ENCODE measurements at regions of chr1 and their contacts with region 1.

Region 1: DNA sequence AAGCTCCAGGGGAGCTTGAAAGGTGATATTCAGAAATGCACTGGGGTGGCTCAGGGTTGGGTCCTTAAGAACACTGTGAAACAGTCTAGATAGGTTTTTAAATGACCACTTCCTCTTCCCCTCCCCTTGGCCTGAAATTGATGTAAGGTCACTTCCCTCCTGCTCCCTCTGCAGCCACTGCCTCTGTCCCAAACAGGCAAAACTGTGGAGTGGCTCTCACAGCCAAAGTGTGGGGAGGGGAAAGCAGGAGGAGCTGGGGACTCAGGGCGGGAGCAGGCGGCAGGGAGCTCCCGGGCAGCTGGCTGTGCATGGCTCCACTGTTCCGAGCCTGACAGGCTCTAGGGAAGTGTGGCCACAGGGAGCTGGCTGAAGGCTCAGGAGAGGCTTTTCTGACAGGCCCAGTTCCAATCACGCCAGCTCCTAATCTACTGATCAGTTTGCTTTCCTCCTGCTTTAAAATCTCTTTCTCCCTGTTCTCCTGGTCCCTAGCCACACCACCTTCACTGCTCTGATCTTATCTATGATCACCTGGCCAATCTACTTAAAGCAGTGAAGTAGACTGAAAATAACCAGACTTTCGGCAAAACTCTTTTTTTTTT is 5.1 kb upstream of the CSRP1 start:
- DNase-seq: peak; percentile 47
- H3K4me3 ChIP-seq: no peak overlapping the region
- H3K27ac ChIP-seq: peak overlapping the region; percentile 49
- H3K4me1 ChIP-seq: no peaks in the 10 kb centered on the region
- H3K27me3 ChIP-seq: no peaks in the 10 kb centered on the region
- CTCF ChIP-seq: no peak

Region 2: DNA sequence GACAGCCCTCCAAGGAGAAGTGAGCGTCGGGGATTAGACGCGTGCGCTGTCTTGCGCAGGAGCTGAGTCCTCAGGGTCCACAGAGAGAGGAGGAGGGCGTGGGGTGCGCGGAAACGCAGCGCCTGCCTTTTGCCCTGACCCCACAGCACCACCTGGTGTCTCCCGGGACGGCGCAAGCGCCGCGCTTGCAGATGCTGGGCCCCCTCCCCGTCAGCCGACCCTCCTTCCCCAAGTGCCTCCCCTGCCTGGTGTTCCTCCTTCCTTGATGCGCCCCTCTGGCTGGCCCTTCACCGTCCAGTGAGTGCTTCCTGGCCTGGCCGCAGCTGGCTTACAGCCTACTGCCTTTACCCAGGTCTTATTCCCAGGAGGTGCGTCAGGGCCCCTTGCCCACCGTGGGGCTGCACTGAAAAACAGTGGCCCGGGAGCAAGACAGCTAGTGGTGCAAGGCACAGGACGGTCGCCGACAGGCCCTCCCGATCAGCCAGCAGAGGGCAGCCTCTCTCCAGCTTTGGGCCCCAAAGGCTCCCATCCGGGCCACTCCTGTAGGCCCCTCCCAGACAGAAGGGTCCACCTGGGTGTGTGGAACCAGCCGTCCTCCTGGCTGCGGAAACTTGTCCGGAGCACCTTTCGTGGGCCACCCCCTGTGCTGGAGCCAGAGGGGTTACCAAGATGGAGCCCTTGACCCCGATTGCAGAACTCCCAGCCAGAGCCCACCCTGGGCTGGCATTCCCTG is 30.1 kb before region 1 on chr1:
- intact Hi-C with region 1: loop called (anchors 1 kb)
- DNase-seq: peak; percentile 90
- H3K4me3 ChIP-seq: peak overlapping the region; percentile 28
- H3K27ac ChIP-seq: peak overlapping the region; percentile 72
- H3K4me1 ChIP-seq: peaks cover 16% of the 10 kb centered on the region
- H3K27me3 ChIP-seq: no peaks in the 10 kb centered on the region
- CTCF ChIP-seq: peak; percentile 95

Region 3: DNA sequence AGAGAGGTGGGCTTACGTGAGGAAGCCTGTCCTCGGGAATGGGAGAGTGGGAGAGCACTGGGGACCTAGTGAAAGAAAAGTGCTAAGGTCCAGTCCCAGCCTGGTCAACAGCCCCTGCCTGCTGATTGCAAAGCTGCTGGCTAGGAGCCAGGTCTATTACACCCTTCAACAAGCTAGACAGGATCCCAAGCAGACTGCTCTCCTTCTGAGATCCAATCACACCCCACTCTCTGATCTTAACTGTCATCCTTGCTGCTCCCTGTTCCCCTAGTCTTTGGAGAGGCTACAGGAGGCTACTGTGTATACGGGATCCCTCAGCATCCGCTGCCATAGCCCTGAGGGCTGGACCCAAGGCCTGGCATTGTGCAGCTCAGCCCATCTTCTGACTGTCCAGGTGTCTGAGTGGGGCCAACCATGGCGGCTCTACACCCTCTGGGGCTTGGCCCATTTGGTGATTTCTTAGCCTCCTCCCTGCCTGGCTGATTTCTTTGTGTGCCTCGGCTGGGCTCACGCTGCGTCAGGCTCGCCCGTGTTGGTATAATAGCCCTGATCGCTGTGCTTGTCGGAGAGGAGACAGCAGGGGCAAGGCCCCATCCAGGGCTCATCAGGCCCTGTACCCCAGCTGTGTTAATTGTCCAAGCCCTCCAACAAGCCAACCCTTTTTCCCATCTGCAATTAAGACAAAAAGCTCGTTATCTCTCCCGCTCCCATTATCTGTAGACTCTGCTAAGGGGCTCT is 70.8 kb after region 1 on chr1:
- intact Hi-C with region 1: no loop called
- DNase-seq: no peak
- H3K4me3 ChIP-seq: no peak overlapping the region
- H3K27ac ChIP-seq: no peak overlapping the region
- H3K4me1 ChIP-seq: no peaks in the 10 kb centered on the region
- H3K27me3 ChIP-seq: no peaks in the 10 kb centered on the region
- CTCF ChIP-seq: no peak

Region 4: DNA sequence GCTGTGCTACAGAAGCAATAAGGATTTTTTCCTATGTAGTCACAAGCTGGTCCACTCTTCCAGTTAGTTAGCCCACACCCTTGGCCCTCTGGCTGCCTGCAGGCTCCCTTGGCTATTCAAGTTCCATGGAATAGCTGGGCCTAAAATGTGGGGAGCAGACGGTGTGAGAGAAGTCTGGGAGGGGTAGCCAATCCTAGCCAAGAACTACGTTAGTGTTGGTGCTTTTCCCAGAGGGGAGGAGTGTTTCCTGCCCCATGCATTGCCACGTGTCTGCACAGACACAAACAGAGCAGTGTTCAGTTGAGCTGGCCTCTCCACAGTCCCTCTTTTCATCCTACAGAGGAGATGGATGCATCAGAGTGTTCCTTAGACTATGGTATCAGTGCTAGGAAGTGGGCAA is 257.9 kb after region 1 on chr1:
- intact Hi-C with region 1: no loop called
- DNase-seq: no peak
- H3K4me3 ChIP-seq: no peak overlapping the region
- H3K27ac ChIP-seq: no peak overlapping the region
- H3K4me1 ChIP-seq: no peaks in the 10 kb centered on the region
- H3K27me3 ChIP-seq: no peaks in the 10 kb centered on the region
- CTCF ChIP-seq: no peak

Measured in colonic mucosa (tissue), 4 donors.